ENCODE measurements at regions of chr12 and their contacts with region 1.

Region 1: DNA sequence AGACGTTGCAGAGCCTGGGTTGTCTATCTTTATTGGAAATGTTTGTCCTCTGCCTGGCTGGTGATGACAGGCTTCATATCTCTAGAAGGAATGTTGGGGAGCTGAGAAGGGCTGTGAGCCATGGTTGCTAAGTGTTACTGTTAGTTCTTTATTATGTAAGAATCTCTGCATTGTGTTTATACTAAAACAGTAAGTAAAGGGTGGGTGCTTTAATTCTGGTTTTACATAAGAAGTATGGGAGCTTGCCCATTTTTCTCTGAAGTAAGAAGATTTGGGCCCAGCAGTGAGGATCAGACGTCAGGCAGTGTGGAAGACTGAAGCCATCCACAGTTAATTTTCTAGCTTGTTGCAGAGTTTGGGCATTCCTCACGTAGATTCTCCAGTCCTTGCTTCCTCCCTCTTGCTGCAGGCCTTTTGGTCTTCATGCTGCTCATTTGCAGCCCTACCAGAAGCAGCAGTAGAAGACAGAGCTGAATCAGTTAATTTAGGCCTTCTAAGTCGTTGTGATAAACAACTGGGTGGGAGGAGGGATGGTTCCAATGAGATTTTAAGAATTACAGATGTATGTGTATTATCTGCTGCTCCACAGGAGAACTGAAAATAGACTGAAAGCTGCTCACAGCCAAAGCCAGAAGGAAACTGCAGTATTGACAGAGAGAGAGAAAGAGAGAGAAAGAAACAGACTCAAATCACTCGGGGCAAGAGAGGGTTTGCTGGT is 21.4 kb downstream of the WNT5B start:
- DNase-seq: no peak
- ATAC-seq: no peak
- H3K4me3 ChIP-seq: no peak overlapping the region
- H3K27ac ChIP-seq: no peak overlapping the region
- H3K4me1 ChIP-seq: no peaks in the 10 kb centered on the region
- H3K27me3 ChIP-seq: no peaks in the 10 kb centered on the region
- CTCF ChIP-seq: no peak
- EP300 ChIP-seq: no peak
- POLR2A ChIP-seq: no peak
- RAD21 ChIP-seq: no peak

Region 2: DNA sequence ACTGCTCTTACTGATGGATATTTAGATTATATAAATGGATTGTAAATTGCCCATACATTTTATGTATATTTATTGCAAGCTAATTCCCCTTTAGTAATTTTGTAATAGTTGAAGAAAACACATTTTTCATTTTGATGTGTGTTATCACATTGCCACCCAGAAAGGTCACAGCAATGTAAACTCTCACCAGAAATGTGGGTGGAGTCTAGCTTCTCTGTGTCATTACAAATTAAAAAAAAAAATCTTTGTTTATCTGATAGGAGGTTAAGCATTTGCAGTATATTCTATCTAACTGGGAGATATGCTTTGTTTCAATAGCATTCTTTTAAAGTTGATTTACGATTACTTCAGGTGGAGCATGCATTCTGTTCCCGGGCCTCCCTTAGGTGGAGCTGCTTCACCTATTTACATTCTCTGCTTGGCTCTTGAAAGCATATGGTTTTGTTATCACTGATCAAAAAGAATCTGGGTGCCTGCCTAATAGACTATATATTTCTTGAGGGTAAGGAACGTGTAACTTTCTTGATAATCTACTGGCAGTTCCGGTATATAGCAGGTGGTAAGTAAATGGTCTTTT is 48.3 kb after region 1 on chr12:
- CTCF ChIA-PET with region 1: interaction called, 13 read pairs
- POLR2A ChIA-PET with region 1: no interaction called
- RAD21 ChIA-PET with region 1: interaction called, 10 read pairs
- SMC1A ChIA-PET with region 1: no interaction called
- in situ Hi-C with region 1: no loop called
- intact Hi-C with region 1: no loop called
- DNase-seq: no peak
- ATAC-seq: 0 out of 3 replicates have a peak, but pooled peaks have one; percentile 11
- H3K4me3 ChIP-seq: no peak overlapping the region
- H3K27ac ChIP-seq: no peak overlapping the region
- H3K4me1 ChIP-seq: no peaks in the 10 kb centered on the region
- H3K27me3 ChIP-seq: no peaks in the 10 kb centered on the region
- CTCF ChIP-seq: peak in 1 of 3 experiments; percentile 24; a peak in 1 of 6 replicates
- EP300 ChIP-seq: no peak
- POLR2A ChIP-seq: no peak
- RAD21 ChIP-seq: 0 out of 2 replicates have a peak, but pooled peaks have one; percentile 1

Region 3: GRCh38 chr12:1947081-1947480 is 296.7 kb after region 1 on chr12:
- CTCF ChIA-PET with region 1: no interaction called
- POLR2A ChIA-PET with region 1: no interaction called
- RAD21 ChIA-PET with region 1: no interaction called
- SMC1A ChIA-PET with region 1: no interaction called
- in situ Hi-C with region 1: no loop called
- intact Hi-C with region 1: no loop called
- DNase-seq: no peak
- ATAC-seq: no peak
- H3K4me3 ChIP-seq: no peak overlapping the region
- H3K27ac ChIP-seq: no peak overlapping the region
- H3K4me1 ChIP-seq: no peaks in the 10 kb centered on the region
- H3K27me3 ChIP-seq: no peaks in the 10 kb centered on the region
- CTCF ChIP-seq: no peak
- EP300 ChIP-seq: no peak
- POLR2A ChIP-seq: no peak
- RAD21 ChIP-seq: no peak